ENCODE measurements at regions of chr15 and their contacts with region 1.

Region 1: DNA sequence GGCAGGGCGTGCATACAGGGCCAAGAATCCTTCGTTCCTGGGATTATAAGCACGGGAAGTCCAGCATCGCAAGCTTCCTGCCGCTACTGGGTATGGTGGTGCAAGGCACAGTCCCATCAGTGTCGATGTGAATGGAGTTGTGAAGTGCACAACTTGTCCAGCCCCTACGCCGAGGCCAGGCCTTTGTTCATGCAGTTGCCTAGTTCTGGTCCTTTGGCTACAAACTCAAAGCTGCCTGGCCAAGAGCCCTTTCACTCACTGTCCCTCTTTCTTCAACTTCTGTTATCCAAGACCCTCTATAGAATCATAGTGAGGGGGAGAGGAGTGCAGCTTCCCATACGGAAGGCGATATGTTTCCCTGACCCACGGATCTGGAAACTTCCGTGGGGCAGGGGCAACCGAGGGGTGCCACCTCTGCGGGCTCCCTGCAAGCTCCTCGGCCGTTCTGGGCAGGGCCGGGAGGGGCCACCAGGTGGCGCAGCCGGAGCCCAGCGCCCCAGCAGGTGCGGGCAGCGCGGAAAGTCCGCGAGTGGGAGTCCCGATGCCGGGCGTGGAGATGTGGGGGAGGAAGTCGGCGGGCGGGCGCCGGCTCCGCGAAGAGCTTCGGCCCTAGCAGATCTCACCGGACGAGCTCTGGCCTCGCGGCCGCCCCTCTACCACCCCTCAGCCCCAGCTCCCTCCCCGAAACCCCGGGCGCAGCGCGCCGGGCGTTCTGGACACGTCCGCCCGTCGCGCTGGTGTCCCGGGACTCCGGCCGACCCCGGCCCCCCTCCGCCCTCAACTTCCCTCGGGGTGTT is 693 bp downstream of the RASGRP1 start:
- DNase-seq: peak; percentile 91
- ATAC-seq: peak; percentile 75
- H3K4me3 Mint-ChIP-seq: peak overlapping the region; percentile 91
- H3K27ac Mint-ChIP-seq: peak overlapping the region; percentile 93
- H3K4me1 Mint-ChIP-seq: peaks cover 48% of the 10 kb centered on the region
- H3K27me3 Mint-ChIP-seq: no peaks in the 10 kb centered on the region

Region 2: DNA sequence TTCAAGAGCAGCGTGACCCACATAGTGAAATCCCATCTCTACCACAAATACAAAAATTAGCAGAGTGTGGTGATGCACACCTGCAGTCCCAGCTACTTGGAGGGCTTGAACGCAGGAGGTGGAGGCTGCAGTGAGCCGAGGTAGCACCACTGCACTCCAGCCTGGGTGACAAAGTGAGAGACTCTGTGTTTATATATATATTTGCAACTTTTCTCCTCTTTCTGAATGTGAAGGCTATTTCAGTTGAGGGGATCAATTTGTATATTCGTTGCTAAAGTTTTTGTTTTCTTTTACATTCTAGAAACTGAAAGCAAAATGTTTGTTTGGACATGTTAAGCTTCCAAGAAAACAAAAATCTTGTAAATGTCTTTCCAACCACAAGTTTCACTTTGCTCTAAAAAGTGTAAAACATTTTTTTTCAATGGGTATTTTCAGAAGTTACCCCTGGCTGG is 139.8 kb before region 1 on chr15:
- CTCF ChIA-PET with region 1: no interaction called
- DNase-seq: no peak
- ATAC-seq: peak; percentile 33
- H3K4me3 Mint-ChIP-seq: no peak overlapping the region
- H3K27ac Mint-ChIP-seq: no peak overlapping the region
- H3K4me1 Mint-ChIP-seq: peaks cover 16% of the 10 kb centered on the region
- H3K27me3 Mint-ChIP-seq: peaks cover 45% of the 10 kb centered on the region

Region 3: DNA sequence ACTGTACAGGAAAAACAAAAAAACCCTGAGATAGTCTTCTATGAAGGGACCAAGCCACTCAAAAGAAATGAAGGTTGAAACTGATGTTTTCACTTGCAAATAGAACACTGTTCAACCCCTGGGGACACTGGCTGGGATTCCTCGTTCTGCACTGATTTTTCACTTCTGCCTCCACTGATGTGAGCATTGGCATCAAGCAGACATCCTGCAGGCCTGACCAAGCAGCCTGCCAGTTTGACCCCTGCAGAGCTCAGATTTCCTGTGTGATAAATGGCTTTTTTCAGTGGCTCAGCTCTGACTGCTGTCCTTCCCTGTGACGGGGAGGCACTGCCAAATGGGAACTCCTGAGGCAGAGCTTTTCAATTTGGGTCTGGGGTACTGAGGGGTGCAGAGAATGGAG is 49.3 kb before region 1 on chr15:
- CTCF ChIA-PET with region 1: interaction called, 11 read pairs
- DNase-seq: no peak
- ATAC-seq: no peak
- H3K4me3 Mint-ChIP-seq: no peak overlapping the region
- H3K27ac Mint-ChIP-seq: peak overlapping the region; percentile 64
- H3K4me1 Mint-ChIP-seq: peaks cover 54% of the 10 kb centered on the region
- H3K27me3 Mint-ChIP-seq: no peaks in the 10 kb centered on the region

Region 4: DNA sequence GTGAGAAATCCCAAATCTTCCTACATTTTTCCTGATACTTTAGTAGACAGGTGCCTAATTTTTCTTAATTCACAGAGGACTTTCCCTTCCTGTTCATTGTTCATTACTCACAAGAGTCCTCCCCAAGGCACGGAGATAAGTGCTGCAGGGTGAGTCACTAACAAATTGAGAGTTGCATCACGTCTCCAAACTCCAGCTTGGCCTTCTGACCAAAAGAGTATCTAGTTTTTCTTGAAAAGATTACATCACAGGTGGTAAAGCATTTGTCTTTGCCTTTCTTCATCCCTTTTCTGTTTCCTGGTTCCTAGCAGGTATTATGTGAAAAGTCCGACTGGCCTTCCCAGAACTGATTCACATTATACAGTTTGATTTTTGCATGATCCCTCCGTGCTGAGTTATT is 25.6 kb after region 1 on chr15:
- CTCF ChIA-PET with region 1: interaction called, 15 read pairs
- DNase-seq: no peak
- ATAC-seq: no peak
- H3K4me3 Mint-ChIP-seq: no peak overlapping the region
- H3K27ac Mint-ChIP-seq: no peak overlapping the region
- H3K4me1 Mint-ChIP-seq: peaks cover 30% of the 10 kb centered on the region
- H3K27me3 Mint-ChIP-seq: no peaks in the 10 kb centered on the region

Region 5: DNA sequence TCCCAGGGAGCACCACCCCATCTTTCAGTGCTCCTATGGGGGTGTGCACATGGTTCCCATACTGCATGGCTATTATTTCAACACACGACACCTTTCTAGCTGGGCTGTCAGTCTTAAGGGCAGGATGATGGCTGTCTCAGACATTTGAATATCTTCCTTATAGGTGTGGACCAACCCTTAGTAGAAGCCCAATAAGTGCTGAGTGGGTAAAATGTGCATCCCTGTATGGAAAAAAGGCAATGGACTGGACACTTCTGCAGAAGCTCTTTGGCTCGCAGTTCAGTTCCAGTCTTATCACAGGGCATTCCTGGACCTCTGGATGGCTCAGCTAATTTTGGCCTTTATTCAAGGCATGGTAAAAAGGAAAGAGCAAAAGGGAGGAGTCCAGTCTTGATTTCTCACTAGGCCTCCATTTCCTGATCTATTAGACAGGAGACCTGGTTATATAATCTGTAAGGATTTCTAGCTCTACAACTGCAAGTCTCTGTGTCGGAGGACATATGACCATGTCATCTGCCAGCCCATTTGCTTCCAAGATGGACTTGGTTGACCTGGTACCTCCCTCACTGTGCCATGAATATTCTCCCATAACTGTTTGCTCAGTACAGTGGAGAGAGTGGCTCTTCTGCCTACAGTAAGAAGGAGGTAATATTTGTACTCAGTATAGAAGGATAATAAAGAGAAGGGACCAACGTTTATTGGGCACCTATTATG is 54.5 kb after region 1 on chr15:
- CTCF ChIA-PET with region 1: interaction called, 54 read pairs
- DNase-seq: no peak
- ATAC-seq: no peak
- H3K4me3 Mint-ChIP-seq: no peak overlapping the region
- H3K27ac Mint-ChIP-seq: no peak overlapping the region
- H3K4me1 Mint-ChIP-seq: peaks cover 5% of the 10 kb centered on the region
- H3K27me3 Mint-ChIP-seq: no peaks in the 10 kb centered on the region

Region 6: DNA sequence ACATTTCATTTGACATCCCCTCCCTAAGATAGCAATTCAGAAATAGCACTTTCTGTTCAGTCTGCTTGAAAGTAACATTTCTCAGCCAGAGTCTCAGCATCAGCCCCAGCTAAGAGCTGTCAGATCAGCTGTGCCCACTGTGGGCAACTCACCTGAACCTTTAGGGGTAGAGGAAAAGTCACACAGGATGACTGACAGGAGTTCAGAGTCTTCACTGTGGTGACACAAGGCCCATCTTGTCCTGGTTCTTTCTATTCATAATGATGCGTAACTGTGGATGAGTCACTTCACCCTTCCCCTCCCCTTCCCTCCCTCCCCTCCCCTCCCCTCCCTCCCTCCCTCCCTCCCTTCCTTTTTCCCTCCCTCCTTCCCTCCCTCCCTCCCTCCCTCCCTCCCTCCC is 96.8 kb after region 1 on chr15:
- CTCF ChIA-PET with region 1: interaction called, 11 read pairs
- DNase-seq: peak; percentile 54
- ATAC-seq: peak; percentile 70
- H3K4me3 Mint-ChIP-seq: no peak overlapping the region
- H3K27ac Mint-ChIP-seq: peak overlapping the region; percentile 76
- H3K4me1 Mint-ChIP-seq: peaks cover 49% of the 10 kb centered on the region
- H3K27me3 Mint-ChIP-seq: no peaks in the 10 kb centered on the region

Region 7: GRCh38 chr15:38683382-38684242 is 119.7 kb after region 1 on chr15:
- CTCF ChIA-PET with region 1: interaction called, 436 read pairs
- DNase-seq: peak; percentile 89
- ATAC-seq: peak; percentile 73
- H3K4me3 Mint-ChIP-seq: peak overlapping the region; percentile 37
- H3K27ac Mint-ChIP-seq: peak overlapping the region; percentile 96
- H3K4me1 Mint-ChIP-seq: peaks cover 70% of the 10 kb centered on the region
- H3K27me3 Mint-ChIP-seq: no peaks in the 10 kb centered on the region